Activated naive CD4-positive, alpha-beta T cell treated with anti-CD3 and anti-CD28 coated beads for 36 hours (primary cell): ENCODE measurements at regions of chrX and their contacts with region 1.

Region 1: DNA sequence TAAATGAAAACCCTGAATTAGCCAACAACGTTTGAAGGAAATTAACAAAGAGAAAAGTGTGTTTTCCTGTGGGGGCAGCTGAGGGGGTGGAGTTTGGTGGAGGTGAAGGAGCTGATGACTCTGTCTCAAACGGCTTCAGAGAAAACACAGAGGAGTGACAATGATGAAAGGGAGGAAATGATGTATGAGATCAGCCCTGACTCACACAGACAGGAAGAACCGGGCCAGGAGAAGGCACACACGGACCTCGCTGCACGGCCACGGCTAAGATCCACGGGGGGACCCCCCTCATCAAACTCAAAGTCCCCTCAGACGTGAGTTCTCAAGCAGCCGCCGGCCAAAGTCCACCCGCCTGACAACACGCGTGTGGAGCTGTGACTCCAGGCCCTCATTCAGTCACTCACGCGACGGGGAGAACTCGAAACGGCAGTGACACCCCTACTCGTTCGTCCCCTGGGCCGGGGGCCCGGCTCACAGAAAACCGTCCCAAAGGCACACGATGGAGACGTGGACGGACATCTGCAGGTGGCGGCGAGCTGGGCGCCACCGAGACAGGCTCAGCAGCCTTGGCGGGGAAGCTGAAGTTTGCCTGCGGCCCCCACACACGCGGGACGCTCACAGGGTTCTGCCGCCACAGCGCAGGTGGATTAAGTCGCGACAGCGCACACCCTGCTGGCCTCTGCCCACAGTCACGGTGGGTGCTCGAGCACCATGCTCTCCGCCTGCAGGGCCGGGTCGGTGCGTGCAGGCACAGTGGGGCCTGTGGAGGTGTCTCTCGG is 28.8 kb downstream of the PPP2R3B start:
- DNase-seq: peak; percentile 72
- H3K4me3 Mint-ChIP-seq: peak overlapping the region; percentile 65
- H3K27ac Mint-ChIP-seq: peak overlapping the region; percentile 98
- H3K4me1 Mint-ChIP-seq: peaks cover 28% of the 10 kb centered on the region
- H3K27me3 Mint-ChIP-seq: no peaks in the 10 kb centered on the region

Region 2: GRCh38 chrX:378443-378842 is 20.6 kb after region 1 on chrX:
- CTCF ChIA-PET with region 1: no interaction called
- intact Hi-C with region 1: loop called (anchors 1 kb)
- DNase-seq: peak; percentile 62
- H3K4me3 Mint-ChIP-seq: no peak overlapping the region
- H3K27ac Mint-ChIP-seq: no peak overlapping the region
- H3K4me1 Mint-ChIP-seq: peaks cover 22% of the 10 kb centered on the region
- H3K27me3 Mint-ChIP-seq: peaks cover 17% of the 10 kb centered on the region